A673 (cell line): ENCODE measurements at regions of chr15 and their contacts with region 1.

Region 1: GRCh38 chr15:90086868-90087268 is 15.4 kb downstream of the IDH2 start:
- DNase-seq: peak; percentile 75
- H3K4me3 ChIP-seq: no peak overlapping the region
- H3K27ac ChIP-seq: no peak overlapping the region
- H3K4me1 ChIP-seq: no peaks in the 10 kb centered on the region
- H3K27me3 ChIP-seq: no peaks in the 10 kb centered on the region
- CTCF ChIP-seq: peak; percentile 82

Region 2: GRCh38 chr15:89898614-89899294 is 188.1 kb before region 1 on chr15:
- CTCF ChIA-PET with region 1: no interaction called
- POLR2A ChIA-PET with region 1: no interaction called
- intact Hi-C with region 1: loop called (anchors 5 kb)
- DNase-seq: peak; percentile 55
- H3K4me3 ChIP-seq: no peak overlapping the region
- H3K27ac ChIP-seq: no peak overlapping the region
- H3K4me1 ChIP-seq: no peaks in the 10 kb centered on the region
- H3K27me3 ChIP-seq: no peaks in the 10 kb centered on the region
- CTCF ChIP-seq: peak; percentile 54

Region 3: GRCh38 chr15:90031231-90031791 is 55.6 kb before region 1 on chr15:
- CTCF ChIA-PET with region 1: interaction called, 10 read pairs
- POLR2A ChIA-PET with region 1: no interaction called
- intact Hi-C with region 1: no loop called
- DNase-seq: peak; percentile 59
- H3K4me3 ChIP-seq: no peak overlapping the region
- H3K27ac ChIP-seq: peak overlapping the region; percentile 51
- H3K4me1 ChIP-seq: peaks cover 37% of the 10 kb centered on the region
- H3K27me3 ChIP-seq: no peaks in the 10 kb centered on the region
- CTCF ChIP-seq: no peak